ENCODE measurements at regions of chr4 and their contacts with region 1.

Region 1: DNA sequence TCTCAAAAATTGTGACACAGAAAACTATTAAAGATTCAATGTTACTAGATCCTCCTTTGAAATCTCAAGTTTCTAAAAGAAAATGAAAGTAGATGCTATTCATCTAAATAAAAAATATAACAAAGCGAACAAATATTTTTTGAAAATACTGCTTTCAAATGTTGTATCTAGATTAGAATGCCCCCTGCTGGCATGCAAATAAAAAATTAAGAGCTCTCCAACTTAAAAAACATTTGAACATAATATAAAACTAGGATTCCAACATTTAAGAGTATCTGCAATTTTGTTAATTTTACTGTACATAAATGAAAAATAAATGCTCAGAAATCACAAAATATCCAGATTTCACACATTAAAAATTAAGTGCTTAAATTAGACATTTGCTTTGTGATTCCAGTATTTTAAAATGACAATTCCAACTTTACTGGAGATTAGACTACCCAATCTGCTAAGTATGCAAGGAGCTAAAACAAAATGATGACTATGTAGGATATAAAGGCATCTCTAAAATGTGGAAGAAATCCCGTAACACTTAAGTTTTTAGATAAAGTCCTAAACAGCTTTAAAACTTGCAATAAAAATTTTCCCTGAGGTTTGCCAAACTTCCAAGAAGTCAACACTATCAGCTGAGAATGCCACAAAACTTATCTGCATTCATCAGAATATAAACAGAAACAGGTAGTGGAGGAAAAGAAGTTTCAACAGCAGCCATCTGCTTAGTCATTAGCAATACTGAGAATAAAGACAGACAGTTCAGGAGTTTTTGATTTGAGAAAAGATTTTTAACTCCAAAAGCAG is 32.7 kb downstream of the DHX15 start:
- DNase-seq: peak; percentile 61
- H3K4me3 ChIP-seq: no peak overlapping the region
- H3K27ac ChIP-seq: peak overlapping the region; percentile 5
- H3K4me1 ChIP-seq: peaks cover 12% of the 10 kb centered on the region
- H3K27me3 ChIP-seq: no peaks in the 10 kb centered on the region
- CTCF ChIP-seq: peak; percentile 19 to 23
- POLR2A ChIP-seq: no peak

Region 2: GRCh38 chr4:23970201-23970850 is 581.4 kb before region 1 on chr4:
- CTCF ChIA-PET with region 1: no interaction called
- POLR2A ChIA-PET with region 1: no interaction called
- dilution Hi-C with region 1: no loop called
- intact Hi-C with region 1: no loop called
- DNase-seq: no peak
- H3K4me3 ChIP-seq: no peak overlapping the region
- H3K27ac ChIP-seq: no peak overlapping the region
- H3K4me1 ChIP-seq: no peaks in the 10 kb centered on the region
- H3K27me3 ChIP-seq: no peaks in the 10 kb centered on the region
- CTCF ChIP-seq: no peak
- POLR2A ChIP-seq: no peak

Region 3: GRCh38 chr4:24514803-24515202 is 36.9 kb before region 1 on chr4:
- CTCF ChIA-PET with region 1: interaction called, 12 read pairs
- POLR2A ChIA-PET with region 1: no interaction called
- dilution Hi-C with region 1: no loop called
- intact Hi-C with region 1: no loop called
- DNase-seq: no peak
- H3K4me3 ChIP-seq: no peak overlapping the region
- H3K27ac ChIP-seq: no peak overlapping the region
- H3K4me1 ChIP-seq: peaks cover 4% of the 10 kb centered on the region
- H3K27me3 ChIP-seq: no peaks in the 10 kb centered on the region
- CTCF ChIP-seq: no peak
- POLR2A ChIP-seq: no peak

Region 4: DNA sequence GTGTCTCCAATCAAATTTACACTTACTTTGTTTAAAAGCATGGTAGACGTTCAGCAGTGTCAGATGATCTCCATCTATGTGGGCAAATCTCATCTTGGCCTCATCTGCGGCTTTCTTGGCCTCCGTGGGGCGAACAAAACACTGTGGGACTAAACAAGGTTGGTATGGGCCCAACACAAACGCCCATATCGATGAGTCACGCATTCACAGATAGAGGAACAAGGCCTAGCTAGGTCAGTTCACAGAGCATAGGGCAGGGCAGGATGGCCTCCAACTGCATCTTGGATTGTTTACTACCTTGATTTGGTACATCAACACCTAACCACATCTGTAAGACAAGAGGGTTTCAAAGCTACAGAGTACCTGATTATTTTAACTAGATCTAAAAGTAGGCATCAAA is 14.7 kb before region 1 on chr4:
- CTCF ChIA-PET with region 1: interaction called, 75 read pairs
- POLR2A ChIA-PET with region 1: no interaction called
- dilution Hi-C with region 1: no loop called
- intact Hi-C with region 1: no loop called
- DNase-seq: no peak
- H3K4me3 ChIP-seq: no peak overlapping the region
- H3K27ac ChIP-seq: no peak overlapping the region
- H3K4me1 ChIP-seq: no peaks in the 10 kb centered on the region
- H3K27me3 ChIP-seq: no peaks in the 10 kb centered on the region
- CTCF ChIP-seq: no peak
- POLR2A ChIP-seq: no peak

Region 5: DNA sequence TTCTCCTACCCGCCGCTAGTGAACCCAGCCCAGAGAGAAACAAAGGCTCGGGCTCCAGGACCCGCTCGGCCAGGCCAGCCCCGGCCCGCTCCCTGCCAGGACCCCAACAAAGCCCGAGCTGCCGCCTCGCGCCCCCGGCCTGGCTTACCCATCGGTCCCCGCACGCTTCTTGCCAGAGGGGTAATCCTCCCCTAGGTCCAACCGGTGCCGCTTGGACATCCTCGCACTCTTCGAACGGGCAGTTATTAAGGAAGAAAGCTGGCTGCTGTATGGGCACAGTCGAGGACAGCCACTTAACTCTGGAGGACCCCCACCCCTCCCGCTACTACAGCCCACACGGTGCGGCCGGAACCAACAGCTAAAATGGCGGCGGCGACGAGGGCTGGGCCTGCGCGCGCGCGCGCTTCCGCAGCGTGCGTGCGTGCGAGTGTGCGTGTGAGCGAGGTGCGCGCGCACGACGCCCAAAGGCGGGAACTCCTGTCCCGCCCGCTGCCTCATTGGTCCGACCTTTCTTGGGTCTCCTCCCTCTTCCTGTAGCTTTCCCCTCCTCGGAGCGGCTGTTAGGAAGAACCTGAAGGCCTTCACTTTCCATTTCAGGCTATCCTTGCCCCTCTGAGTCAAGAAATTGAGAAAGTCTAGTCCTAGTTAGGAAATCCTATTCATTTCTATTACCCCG is 32.6 kb after region 1 on chr4 and contains the start of gene DHX15:
- CTCF ChIA-PET with region 1: interaction called, 13 read pairs
- POLR2A ChIA-PET with region 1: no interaction called
- dilution Hi-C with region 1: no loop called
- intact Hi-C with region 1: no loop called
- DNase-seq: peak; percentile 97
- H3K4me3 ChIP-seq: peak within 1 kb of the TSS; percentile 82 to 97 (median 92)
- H3K27ac ChIP-seq: peak within 1 kb of the TSS; percentile 79
- H3K4me1 ChIP-seq: peaks cover 18% of the 10 kb centered on the region
- H3K27me3 ChIP-seq: no peaks in the 10 kb centered on the region
- CTCF ChIP-seq: no peak
- POLR2A ChIP-seq: peak; percentile 90
- total RNA-seq, gene DHX15: 148 and 152 TPM in 2 replicates

Region 6: GRCh38 chr4:24630937-24631336 is 79.2 kb after region 1 on chr4:
- CTCF ChIA-PET with region 1: no interaction called
- POLR2A ChIA-PET with region 1: no interaction called
- dilution Hi-C with region 1: no loop called
- intact Hi-C with region 1: no loop called
- DNase-seq: peak; percentile 63
- H3K4me3 ChIP-seq: no peak overlapping the region
- H3K27ac ChIP-seq: no peak overlapping the region
- H3K4me1 ChIP-seq: peaks cover 3% of the 10 kb centered on the region
- H3K27me3 ChIP-seq: no peaks in the 10 kb centered on the region
- CTCF ChIP-seq: no peak
- POLR2A ChIP-seq: no peak

Measured in endothelial cell of umbilical vein (primary cell).